ENCODE measurements at regions of chr2 and their contacts with region 1.

Region 1: GRCh38 chr2:98656800-98657199 is 48.4 kb downstream of the UNC50 start:
- DNase-seq: peak; percentile 69
- ATAC-seq: peak; percentile 71
- H3K4me3 Mint-ChIP-seq: peak overlapping the region; percentile 57
- H3K27ac Mint-ChIP-seq: peak overlapping the region; percentile 87
- H3K4me1 Mint-ChIP-seq: peaks cover 86% of the 10 kb centered on the region
- H3K27me3 Mint-ChIP-seq: no peaks in the 10 kb centered on the region

Region 2: DNA sequence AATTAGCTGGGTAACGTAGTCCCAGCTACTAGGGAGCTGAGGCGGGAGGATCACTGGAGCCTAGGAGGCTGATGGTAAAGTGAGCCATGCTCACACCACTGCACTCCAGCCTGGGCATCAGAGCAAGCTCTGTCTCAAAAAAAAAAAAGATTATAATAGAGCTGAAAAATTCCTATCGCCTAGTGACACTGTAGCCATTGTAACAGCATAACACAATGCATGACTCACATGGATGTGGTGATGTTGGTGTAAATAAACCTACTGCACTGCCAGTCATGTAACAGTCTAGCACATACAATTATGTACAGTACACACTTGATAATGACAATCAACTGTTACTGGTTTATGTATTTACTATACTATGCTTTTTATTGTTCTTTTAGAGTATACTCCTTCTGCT is 34.5 kb after region 1 on chr2:
- CTCF ChIA-PET with region 1: interaction called, 16 read pairs
- POLR2A ChIA-PET with region 1: no interaction called
- DNase-seq: no peak
- ATAC-seq: no peak
- H3K4me3 Mint-ChIP-seq: no peak overlapping the region
- H3K27ac Mint-ChIP-seq: no peak overlapping the region
- H3K4me1 Mint-ChIP-seq: peaks cover 66% of the 10 kb centered on the region
- H3K27me3 Mint-ChIP-seq: no peaks in the 10 kb centered on the region

Region 3: DNA sequence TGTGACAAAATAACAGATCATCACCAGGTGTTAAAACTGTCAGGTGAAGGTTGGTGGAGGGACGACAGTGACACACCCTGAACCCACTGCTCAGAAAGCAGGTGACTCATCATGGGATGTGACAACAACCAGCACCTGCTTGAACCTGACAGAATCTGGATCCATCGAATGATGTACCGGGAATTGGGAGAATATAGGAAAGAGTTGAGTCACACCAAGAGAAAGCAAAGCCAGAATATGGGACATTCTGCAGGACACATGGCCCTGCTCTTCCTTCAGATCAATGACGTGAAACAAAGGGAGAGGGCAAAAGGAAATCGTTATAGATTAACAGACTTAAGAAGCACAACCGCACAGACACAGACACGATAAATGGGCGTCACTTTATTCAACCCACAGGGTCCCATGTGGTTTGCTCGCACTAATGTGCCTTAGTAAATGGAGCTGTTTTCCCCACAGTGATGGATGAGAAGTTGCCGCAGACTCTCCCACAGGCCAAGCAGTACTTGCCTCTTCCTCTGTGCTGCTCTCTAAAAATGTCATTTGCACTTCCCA is 179.1 kb after region 1 on chr2:
- CTCF ChIA-PET with region 1: interaction called, 10 read pairs
- POLR2A ChIA-PET with region 1: interaction called, 4 read pairs
- DNase-seq: peak; percentile 71
- ATAC-seq: peak; percentile 79
- H3K4me3 Mint-ChIP-seq: peak overlapping the region; percentile 37
- H3K27ac Mint-ChIP-seq: peak overlapping the region; percentile 71
- H3K4me1 Mint-ChIP-seq: peaks cover 50% of the 10 kb centered on the region
- H3K27me3 Mint-ChIP-seq: peaks cover 5% of the 10 kb centered on the region